ENCODE measurements at regions of chr3 and their contacts with region 1.

Region 1: DNA sequence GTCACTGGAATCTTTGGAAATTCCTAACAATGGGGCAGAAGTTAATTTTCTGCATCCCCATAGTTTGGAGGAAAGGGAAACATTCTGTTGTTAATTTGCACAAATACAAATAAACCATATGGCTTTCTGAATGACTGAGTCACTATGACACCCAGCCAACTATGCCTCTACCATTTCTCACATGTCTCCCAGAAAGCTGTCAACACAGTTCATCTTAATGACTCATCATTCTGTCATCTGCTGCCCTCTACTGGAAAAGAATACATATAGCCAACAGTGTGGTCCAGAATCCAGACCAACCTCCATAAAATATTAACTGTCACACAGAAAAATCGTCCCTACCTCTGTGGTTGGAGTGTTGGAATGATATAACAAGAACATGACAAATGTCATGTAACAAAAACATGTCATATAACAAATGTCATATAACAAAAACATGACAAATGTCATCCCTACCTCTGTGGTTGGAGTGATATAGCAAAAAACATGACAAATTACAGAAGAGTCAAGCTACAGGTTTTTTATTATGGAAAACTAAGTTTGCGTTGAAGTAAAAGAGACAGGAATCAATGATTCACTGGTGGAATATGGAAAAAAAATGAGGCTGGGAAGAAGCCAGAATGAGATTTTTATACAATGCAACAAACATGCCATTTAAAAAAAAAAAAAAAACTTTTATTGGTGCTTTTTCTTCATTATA is 47.7 kb upstream of the GYG1 start:
- DNase-seq: peak; percentile 91
- H3K27ac ChIP-seq: no peak overlapping the region
- CTCF ChIP-seq: peak; percentile 82

Region 2: GRCh38 chr3:148861277-148861869 is 82.3 kb before region 1 on chr3:
- CTCF ChIA-PET with region 1: interaction called, 10 read pairs
- POLR2A ChIA-PET with region 1: no interaction called
- DNase-seq: peak; percentile 35
- H3K27ac ChIP-seq: no peak overlapping the region
- CTCF ChIP-seq: peak; percentile 83